ENCODE measurements at regions of chr17 and their contacts with region 1.

Region 1: GRCh38 chr17:7045909-7046724 is 2.2 kb upstream of the SLC16A11 start:
- DNase-seq: no peak
- H3K4me3 ChIP-seq: peak overlapping the region; percentile 26 to 37
- H3K27ac ChIP-seq: no peak overlapping the region
- H3K4me1 ChIP-seq: peaks cover 12 to 22% of the 10 kb centered on the region in 2 donors
- H3K27me3 ChIP-seq: peaks cover 7% of the 10 kb centered on the region
- CTCF ChIP-seq: peak; percentile 60 to 82 (median 78)

Region 2: DNA sequence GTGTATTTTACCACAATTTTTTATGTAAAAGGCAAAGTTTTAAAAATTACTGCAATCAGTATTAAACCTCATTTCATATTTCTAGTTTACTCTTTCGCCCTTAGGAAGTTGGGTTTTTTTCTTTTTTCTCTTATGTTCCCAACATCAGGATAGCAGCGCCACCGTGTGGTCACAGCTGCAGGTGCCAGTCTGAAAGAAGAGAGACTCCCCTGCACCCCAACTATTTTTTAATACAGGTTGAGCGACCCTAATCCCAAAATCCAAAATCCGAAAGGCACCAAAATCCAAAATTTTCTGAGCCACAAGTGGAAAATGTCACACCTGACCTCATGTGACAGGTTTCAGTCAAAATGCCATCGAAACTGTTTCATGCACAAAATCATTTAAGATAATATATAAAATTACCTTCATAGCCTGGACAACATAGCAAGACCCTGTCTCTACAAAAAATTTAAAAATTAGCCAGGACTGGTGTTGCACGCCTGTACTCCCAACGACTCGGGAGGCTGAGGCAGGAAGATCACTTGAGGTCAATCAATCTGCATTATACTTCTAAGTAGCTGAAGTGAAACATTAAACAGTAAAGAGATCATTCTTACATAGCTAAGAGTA is 90.3 kb after region 1 on chr17:
- intact Hi-C with region 1: loop called (anchors 2 kb)
- DNase-seq: peak in 1 of 2 donors; percentile 80
- H3K4me3 ChIP-seq: no peak overlapping the region
- H3K27ac ChIP-seq: no peak overlapping the region
- H3K4me1 ChIP-seq: no peaks in the 10 kb centered on the region
- H3K27me3 ChIP-seq: no peaks in the 10 kb centered on the region
- CTCF ChIP-seq: peak; percentile 75 to 88 (median 78)

Region 3: DNA sequence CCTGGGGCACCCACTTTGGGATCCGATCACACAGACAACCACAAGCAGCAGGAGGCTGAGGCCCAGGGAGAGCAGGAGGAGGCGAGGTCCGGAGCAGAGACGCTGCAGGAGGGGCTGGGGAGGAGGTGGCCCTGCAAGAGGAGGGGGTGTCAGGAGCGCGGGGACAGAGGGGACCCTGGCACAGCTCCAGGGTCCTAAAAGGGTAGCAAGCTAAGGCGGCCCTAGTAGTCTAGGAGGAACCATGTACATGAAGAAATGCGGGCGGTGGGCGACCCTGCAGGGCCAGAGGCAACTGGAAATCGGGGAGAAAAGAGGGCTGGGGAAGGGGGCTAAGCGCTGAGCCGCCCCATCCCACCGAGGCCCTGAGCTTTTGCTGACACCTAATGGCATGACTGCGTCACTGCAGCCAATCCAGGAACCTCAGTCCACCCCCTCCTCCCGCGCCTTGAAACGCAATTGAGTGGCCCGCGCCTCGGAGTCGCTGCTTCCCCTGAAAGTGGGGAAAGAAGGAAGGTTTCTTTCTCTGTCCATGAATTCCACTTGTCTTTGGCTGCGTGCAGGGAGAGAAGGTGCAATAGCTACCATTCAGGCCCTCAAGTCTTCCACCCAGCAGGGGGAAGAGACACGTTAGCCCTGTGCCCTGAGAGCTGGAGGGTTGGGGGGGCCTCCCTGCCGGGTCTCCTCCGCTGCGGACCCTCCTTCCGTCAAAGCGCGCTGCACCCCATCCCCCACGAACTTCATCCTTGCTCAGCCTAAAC is 131.3 kb after region 1 on chr17:
- intact Hi-C with region 1: loop called (anchors 5 kb)
- DNase-seq: peak in 1 of 2 donors; percentile 73
- H3K4me3 ChIP-seq: peak overlapping the region; percentile 18 to 51
- H3K27ac ChIP-seq: no peak overlapping the region
- H3K4me1 ChIP-seq: peaks cover 4 to 13% of the 10 kb centered on the region in 2 donors
- H3K27me3 ChIP-seq: no peaks in the 10 kb centered on the region
- CTCF ChIP-seq: peak; percentile 66 to 83 (median 82)

Region 4: DNA sequence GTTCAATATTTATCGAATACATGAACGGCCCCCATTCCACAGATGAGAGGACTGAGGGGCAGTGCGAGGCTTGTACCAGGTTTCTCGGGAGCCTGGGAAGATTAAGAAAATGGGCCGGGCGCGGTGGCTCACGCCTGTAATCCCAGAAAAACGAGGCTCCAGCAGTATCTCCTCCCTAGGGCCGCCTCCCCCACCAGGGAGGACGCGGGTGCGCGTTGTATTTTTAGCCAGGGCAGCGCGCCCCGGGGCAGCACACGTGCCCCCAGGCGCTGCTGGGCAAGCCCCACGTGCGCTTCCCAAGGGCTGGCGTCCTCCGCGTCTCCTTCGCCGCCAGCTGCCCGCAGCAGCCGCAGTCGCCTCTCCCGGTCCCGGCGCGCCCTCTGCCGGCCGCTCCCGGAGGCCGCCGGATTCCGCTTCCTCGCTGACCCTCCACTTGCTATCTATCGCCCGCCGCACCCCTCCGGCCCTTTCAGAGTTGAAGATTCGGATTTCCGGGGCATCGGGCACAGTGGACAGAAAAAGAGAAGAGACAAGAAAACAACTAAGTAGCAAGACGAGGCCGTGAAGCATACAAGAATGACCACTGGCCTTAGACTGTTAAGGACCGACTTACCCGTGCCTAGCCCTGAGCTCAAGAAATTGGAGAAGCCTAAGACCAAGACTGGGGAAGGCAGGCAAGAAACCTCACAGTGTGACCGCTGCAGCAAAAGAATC is 250.2 kb after region 1 on chr17:
- intact Hi-C with region 1: loop called (anchors 5 kb)
- DNase-seq: peak in 1 of 2 donors; percentile 89
- H3K4me3 ChIP-seq: peak overlapping the region in 1 of 2 donors; percentile 33
- H3K27ac ChIP-seq: peak overlapping the region in 1 of 2 donors; percentile 34
- H3K4me1 ChIP-seq: peaks cover 4 to 22% of the 10 kb centered on the region in 2 donors
- H3K27me3 ChIP-seq: peaks cover 8% of the 10 kb centered on the region
- CTCF ChIP-seq: peak; percentile 95 to 97 (median 96)

Measured in ascending aorta (tissue), 2 donors.